ENCODE measurements at regions of chr6 and their contacts with region 1.

Region 1: DNA sequence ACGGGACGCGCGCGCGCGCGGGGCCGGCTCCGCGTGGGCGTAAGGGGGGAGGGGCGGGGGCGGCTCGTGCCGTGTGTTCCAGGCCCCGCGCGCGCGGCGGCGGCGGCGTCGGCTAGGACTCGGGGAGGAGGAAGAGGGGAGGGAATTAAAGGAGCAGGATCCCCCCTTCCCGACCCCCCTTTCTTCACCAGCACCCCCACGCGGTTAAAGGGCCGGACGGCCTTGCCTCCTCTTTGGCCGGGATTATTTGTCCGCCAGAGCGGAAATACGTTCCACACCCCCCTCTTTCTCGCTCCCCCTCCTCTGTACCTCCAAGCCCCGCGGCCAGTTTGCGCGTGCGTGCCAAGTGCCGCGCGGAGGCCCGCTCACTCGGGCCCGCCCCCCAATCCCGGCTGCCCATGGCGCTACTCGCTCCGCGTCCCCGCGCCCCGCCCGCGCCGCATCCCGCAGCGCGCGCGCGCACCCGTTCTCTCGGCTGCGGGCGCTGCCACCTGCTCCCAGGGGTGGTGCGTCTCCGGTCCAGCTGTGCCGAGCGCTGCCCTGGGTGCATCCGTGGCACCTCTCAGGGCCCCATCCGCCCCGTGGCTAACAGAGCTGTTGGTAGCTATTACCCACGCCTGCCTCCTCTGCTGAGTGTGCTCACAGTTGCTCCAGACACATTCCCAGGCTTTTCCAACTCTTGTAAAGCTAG is at the start of gene ZBTB12:
- H3K4me3 ChIP-seq: peak within 1 kb of the TSS; percentile 62
- H3K27ac ChIP-seq: peak within 1 kb of the TSS; percentile 9
- H3K4me1 ChIP-seq: peaks cover 9% of the 10 kb centered on the region
- CTCF ChIP-seq: peak; percentile 57; the same call in 1 of the 2 replicates

Region 2: DNA sequence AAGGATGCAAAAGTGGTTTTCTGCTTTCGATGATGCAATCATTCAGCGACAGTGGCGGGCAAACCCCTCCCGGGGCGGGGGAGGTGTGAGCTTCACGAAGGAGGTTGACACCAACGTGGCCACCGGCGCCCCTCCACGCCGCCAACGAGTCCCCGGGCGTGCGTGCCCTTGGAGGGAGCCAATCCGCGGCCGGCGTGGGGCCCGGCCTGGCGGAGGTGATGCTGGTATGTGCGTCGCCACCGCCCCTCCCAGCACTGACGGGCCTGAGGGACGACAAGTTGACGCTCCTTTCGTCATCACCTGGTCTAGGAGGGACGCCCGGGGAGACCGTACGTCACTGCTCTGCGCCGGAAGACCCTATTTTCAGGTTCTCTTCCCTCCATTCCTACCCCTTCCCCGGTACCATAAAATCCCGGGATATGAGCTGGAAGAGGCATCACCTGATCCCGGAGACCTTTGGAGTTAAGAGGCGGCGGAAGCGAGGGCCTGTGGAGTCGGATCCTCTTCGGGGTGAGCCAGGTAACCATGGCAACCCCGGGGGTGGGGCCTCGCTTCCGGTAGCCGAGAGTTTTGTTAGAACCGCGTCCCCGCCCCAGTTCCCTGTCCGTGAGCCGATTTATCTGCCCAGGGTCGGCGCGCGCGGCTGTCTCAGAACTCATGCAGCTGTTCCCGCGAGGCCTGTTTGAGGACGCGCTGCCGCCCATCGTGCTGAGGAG is 70.1 kb after region 1 on chr6 and contains the start of gene DXO:
- CTCF ChIA-PET with region 1: no interaction called
- POLR2A ChIA-PET with region 1: interaction called, 23 read pairs
- H3K4me3 ChIP-seq: peak within 1 kb of the TSS; percentile 83
- H3K27ac ChIP-seq: peak within 1 kb of the TSS; percentile 74
- H3K4me1 ChIP-seq: peaks cover 5% of the 10 kb centered on the region
- CTCF ChIP-seq: no peak

Measured in HEK293 (cell line).